OCI-LY7 (cell line): ENCODE measurements at regions of chr11 and their contacts with region 1.

Region 1: GRCh38 chr11:67239783-67240575 is 26.3 kb upstream of the GRK2 start:
- DNase-seq: peak; percentile 98
- H3K4me3 ChIP-seq: peak overlapping the region; percentile 80
- H3K27ac ChIP-seq: peak overlapping the region; percentile 72
- H3K4me1 ChIP-seq: peaks cover 32% of the 10 kb centered on the region
- CTCF ChIP-seq: no peak

Region 2: GRCh38 chr11:67082035-67082791 is 157.8 kb before region 1 on chr11:
- CTCF ChIA-PET with region 1: no interaction called
- POLR2A ChIA-PET with region 1: interaction called, 3 read pairs
- intact Hi-C with region 1: loop called (anchors 5 kb)
- DNase-seq: no peak
- H3K4me3 ChIP-seq: no peak overlapping the region
- H3K27ac ChIP-seq: no peak overlapping the region
- H3K4me1 ChIP-seq: peaks cover 12% of the 10 kb centered on the region
- CTCF ChIP-seq: no peak

Region 3: DNA sequence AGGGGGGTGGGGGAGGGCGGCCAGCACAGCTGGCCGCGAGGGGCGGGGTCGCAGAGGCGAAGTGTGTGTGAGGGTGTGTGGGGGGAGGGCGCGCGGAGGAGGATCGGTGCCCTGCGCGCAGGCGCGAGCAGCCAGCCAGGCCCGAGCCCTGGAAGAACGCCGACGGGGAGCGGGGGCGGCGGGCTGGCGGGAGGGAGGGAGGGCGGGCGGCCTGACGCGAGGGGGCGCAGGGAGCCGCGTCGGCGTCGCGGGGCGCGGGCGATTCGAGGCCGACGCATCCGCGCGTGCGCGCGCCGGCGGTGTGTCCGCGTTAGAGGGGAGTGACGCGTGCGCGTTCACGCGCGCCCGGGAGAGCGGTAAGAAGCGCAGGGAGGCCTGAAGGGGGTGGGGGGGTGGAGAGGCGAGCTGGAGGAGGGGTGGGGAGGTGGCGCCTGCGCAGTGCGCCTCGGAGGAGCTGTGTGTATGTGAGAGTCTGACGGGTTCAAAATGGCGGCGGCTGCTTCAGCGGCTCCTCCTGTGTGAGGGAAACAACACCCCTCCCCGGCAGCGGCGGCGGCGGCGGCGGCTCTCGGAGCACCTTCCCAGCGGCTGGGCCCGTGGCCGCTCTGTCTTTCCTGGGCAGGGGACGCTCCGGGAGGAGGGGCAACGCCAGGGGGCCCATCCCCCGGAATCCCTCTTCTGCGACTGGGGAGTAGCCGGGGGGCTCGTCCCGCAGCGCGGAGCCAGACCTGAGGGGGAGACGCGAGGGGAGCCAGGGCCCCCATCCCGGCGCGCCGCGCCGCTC is 121.0 kb before region 1 on chr11 and contains the start of gene KDM2A:
- CTCF ChIA-PET with region 1: no interaction called
- POLR2A ChIA-PET with region 1: interaction called, 4 read pairs
- intact Hi-C with region 1: loop called (anchors 1 kb)
- DNase-seq: peak; percentile 99
- H3K4me3 ChIP-seq: peak within 1 kb of the TSS; percentile 87
- H3K27ac ChIP-seq: peak within 1 kb of the TSS; percentile 91
- H3K4me1 ChIP-seq: peaks cover 29% of the 10 kb centered on the region
- CTCF ChIP-seq: no peak
- total RNA-seq, gene KDM2A: 25.4 and 31.7 TPM in 2 replicates

Region 4: GRCh38 chr11:67213178-67213621 is 26.8 kb before region 1 on chr11:
- CTCF ChIA-PET with region 1: no interaction called
- POLR2A ChIA-PET with region 1: interaction called, 6 read pairs
- intact Hi-C with region 1: loop called (anchors 2 kb)
- DNase-seq: peak; percentile 86
- H3K4me3 ChIP-seq: peak overlapping the region; percentile 8
- H3K27ac ChIP-seq: peak overlapping the region; percentile 81
- H3K4me1 ChIP-seq: peaks cover 24% of the 10 kb centered on the region
- CTCF ChIP-seq: no peak